ENCODE measurements at regions of chr2 and their contacts with region 1.

Region 1: DNA sequence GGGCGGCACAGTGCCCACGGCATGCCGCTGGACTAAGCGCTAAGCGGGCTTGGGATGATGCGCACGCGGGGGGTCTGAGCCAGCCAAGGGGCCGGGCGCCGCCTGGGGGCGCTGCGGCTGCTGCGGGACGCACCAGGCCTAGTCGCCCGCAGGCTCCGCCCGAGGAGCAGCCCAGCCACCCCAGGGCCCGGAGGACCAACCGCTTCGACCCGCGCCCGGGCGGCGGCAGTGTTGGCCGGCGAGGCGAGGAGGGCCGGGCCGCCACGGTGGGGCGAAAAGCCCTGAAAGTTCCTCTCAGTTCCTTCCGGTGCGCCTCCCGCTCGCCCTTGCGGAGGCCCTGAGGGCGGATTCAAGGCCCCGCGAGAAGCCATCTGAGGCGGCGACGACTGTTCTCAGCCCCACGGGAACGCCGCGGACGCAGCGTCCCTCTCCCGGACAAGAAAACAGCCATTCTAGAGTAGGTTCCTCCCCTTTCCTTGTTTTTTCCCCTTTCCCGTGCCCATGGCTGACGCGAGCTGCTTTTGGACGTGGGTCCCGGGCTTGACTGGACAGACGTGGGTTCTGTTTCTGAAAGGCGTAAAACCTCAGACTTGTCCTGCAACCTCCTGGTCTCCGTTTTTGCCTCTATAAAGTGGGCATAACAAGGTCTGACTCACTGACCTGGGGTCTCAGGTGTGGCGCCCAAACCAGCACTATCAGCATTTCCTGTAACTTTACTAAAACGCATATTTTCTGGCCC is at the start of gene ANKAR:
- DNase-seq: peak; percentile 83
- ATAC-seq: peak; percentile 96
- H3K4me3 Mint-ChIP-seq: peak within 1 kb of the TSS; percentile 89
- H3K27ac Mint-ChIP-seq: peak within 1 kb of the TSS; percentile 94
- H3K4me1 Mint-ChIP-seq: peaks cover 30% of the 10 kb centered on the region
- H3K27me3 Mint-ChIP-seq: no peaks in the 10 kb centered on the region
- total RNA-seq, gene ANKAR: 4.8 to 9.3 TPM

Region 2: GRCh38 chr2:189661148-189661956 is 13.2 kb before region 1 on chr2 and contains the start of gene ASNSD1:
- CTCF ChIA-PET with region 1: interaction called, 65 read pairs
- DNase-seq: peak; percentile 99
- ATAC-seq: peak; percentile 84
- H3K4me3 Mint-ChIP-seq: no peak within 1 kb of the TSS
- H3K27ac Mint-ChIP-seq: no peak within 1 kb of the TSS
- H3K4me1 Mint-ChIP-seq: peaks cover 54% of the 10 kb centered on the region
- H3K27me3 Mint-ChIP-seq: no peaks in the 10 kb centered on the region
- total RNA-seq, gene ASNSD1: 30.7 to 39.1 TPM

Region 3: DNA sequence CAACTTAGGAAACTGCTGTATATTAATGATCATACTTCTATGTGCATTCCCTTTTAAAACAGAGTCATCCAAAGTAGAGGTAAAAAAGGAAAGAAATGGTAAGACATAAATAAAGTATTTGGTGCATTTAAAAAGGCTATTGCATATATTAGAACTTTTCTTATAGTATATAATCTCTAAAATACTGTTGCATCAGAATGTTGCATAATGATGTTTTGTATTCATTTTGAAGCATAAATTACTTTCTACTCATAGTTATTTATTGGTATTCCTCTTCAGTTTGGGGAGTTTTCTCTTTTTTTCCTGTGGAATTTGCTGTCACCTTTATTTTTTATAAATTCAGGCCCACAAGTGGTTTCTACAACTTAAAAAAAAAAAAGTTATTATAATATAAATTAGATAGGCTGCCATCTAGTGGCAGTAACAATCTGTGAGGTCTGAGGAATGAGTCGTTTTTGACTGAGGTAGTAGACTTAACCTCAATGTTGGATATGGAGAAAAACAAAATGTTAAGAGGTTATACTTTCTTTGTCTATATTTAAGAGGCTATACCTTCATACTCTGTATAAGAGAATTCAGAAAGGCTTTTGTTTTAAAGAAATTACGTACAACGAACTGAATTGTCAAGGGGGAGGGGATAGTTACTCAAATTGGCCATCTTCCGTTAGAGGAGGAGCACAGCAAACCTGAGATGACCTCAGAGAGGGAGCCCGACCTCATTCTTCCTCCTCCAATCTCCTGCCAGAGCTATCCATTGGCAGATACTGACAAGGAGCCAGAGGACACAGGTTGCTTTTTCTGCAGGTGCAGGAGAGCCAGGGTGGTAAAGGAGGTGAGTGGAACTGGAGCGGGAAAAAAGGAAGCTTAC is 23.7 kb after region 1 on chr2:
- CTCF ChIA-PET with region 1: interaction called, 11 read pairs
- DNase-seq: peak; percentile 51
- ATAC-seq: peak; percentile 68
- H3K4me3 Mint-ChIP-seq: peak overlapping the region; percentile 27
- H3K27ac Mint-ChIP-seq: peak overlapping the region; percentile 70
- H3K4me1 Mint-ChIP-seq: peaks cover 2% of the 10 kb centered on the region
- H3K27me3 Mint-ChIP-seq: no peaks in the 10 kb centered on the region

Region 4: DNA sequence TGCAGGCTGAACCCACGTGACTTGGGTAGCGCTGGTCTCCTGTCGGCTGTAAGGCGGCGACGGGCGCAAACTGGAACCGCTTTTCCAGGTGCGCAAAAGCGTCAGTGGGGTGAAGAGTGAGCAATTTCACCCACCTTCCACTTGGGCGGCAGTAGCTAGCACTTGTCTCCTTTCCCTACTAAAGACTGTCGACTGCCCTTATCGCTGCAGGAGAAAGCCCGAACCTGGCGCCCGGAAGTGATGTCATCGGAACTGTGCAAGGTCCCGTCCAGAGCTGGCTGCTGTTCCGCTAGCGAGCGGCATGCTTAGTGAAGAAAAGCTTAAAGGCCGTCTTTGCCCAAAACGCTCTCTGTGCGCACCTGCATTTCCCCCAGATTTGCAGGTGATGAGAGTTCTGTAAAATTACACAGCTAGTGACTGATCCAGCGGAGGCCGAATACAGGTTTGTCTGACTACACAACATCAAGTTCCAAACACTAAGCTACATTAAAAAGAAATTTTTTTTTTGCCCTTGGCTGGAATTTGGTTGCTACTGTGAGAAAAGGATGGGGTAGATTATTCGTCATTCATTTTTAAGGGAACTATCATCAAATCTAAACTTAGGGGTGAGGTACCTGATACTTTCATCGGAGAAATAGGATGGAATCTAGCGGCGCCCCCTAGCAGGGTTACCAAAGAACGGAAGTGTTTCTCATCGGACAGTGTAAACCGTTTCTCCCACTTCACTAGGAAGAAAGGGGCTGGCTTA is 88.2 kb after region 1 on chr2 and contains the start of gene OSGEPL1:
- CTCF ChIA-PET with region 1: interaction called, 16 read pairs
- DNase-seq: peak; percentile 96
- ATAC-seq: peak; percentile 96
- H3K4me3 Mint-ChIP-seq: peak within 1 kb of the TSS; percentile 92
- H3K27ac Mint-ChIP-seq: peak within 1 kb of the TSS; percentile 98
- H3K4me1 Mint-ChIP-seq: peaks cover 14% of the 10 kb centered on the region
- H3K27me3 Mint-ChIP-seq: no peaks in the 10 kb centered on the region
- total RNA-seq, gene OSGEPL1: 10.0 to 11.3 TPM

Region 5: GRCh38 chr2:189982777-189983394 is 308.3 kb after region 1 on chr2:
- CTCF ChIA-PET with region 1: no interaction called
- DNase-seq: no peak
- ATAC-seq: no peak
- H3K4me3 Mint-ChIP-seq: no peak overlapping the region
- H3K27ac Mint-ChIP-seq: no peak overlapping the region
- H3K4me1 Mint-ChIP-seq: no peaks in the 10 kb centered on the region
- H3K27me3 Mint-ChIP-seq: no peaks in the 10 kb centered on the region

Measured in activated CD8-positive, alpha-beta memory T cell treated with anti-CD3 and anti-CD28 coated beads, Interleukin-2, amount 10 ng/mL, durations not matched to agents 7 days and 5 days (primary cell).